ENCODE measurements at regions of chr2 and their contacts with region 1.

Region 1: DNA sequence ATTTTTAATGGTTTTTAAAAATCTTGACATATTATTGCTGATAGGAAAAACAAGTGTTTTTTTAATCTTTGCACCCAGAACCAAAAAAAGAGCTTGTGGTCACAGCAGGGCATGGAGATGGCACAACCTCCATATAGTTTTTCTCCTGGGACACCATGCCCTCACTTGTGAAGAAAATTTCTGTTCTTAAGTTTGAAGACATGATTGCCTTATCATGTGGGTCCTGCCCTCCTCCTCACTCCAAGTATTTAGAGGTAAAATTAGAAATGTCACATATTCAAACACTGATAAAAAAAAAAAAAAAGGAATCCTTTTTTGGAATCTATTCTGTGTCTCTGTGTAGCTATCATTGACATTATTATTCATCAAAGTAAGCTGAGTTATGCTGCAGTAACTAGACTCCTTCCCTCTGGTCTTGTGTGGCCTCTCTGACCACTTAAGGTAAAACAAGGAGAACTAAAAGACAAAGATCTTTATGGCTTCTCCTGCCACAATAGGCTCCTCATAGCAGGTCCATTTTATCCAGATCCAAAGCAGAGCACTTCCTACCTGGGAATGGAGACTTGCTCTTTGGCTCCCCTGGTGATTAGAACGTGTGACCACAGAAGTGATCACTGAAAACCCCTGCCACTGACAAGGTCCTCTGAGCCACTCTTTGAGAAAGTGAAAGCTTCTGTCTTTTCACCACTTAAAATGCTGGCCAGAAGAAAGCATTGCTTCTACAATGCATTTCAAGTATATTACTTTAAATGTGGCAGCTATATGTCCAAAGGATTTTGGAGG is 19.8 kb downstream of the ADD2 start:
- DNase-seq: peak in 1 of 2 experiments; percentile 38
- H3K4me3 ChIP-seq: no peak overlapping the region
- H3K27ac ChIP-seq: no peak overlapping the region
- H3K4me1 ChIP-seq: peaks cover 1 to 19% (median 9%) of the 10 kb centered on the region in 4 experiments; a peak in 4 of 7 replicates
- H3K27me3 ChIP-seq: no peaks in the 10 kb centered on the region
- CTCF ChIP-seq: peak in 2 of 3 experiments; percentile 18 to 51; a peak in 2 of 4 replicates
- EP300 ChIP-seq: no peak
- POLR2A ChIP-seq: no peak
- RAD21 ChIP-seq: peak in 1 of 2 experiments; percentile 38; a peak in 2 of 4 replicates

Region 2: DNA sequence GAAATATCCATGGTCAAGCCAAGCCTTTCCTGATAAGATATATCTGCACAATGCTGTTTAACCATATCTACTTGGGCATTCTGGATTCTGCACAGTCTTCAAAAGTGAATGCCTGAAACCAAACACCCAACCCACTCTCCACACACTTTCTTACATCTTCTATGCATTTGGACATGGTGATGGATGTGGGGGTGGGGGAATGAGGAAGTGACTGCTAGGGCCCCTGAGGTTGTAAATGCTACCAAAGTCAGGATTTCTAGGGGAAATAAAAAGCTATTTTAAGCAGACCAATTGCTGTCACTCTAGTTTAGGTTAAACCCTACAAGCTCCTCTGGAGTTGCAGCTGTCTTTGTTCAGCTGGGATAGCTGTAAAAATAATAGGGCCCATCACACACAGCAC is 167.8 kb before region 1 on chr2:
- CTCF ChIA-PET with region 1: no interaction called
- POLR2A ChIA-PET with region 1: no interaction called
- DNase-seq: no peak
- H3K4me3 ChIP-seq: no peak overlapping the region
- H3K27ac ChIP-seq: no peak overlapping the region
- H3K4me1 ChIP-seq: no peaks in the 10 kb centered on the region
- H3K27me3 ChIP-seq: no peaks in the 10 kb centered on the region
- CTCF ChIP-seq: no peak
- EP300 ChIP-seq: no peak
- POLR2A ChIP-seq: no peak
- RAD21 ChIP-seq: no peak

Region 3: GRCh38 chr2:70616168-70616694 is 132.0 kb before region 1 on chr2:
- CTCF ChIA-PET with region 1: no interaction called
- POLR2A ChIA-PET with region 1: no interaction called
- DNase-seq: no peak
- H3K4me3 ChIP-seq: no peak overlapping the region
- H3K27ac ChIP-seq: no peak overlapping the region
- H3K4me1 ChIP-seq: peaks cover 1 to 6% (median 2%) of the 10 kb centered on the region in 4 experiments; a peak in 5 of 7 replicates
- H3K27me3 ChIP-seq: no peaks in the 10 kb centered on the region; a peak in 1 of 7 replicates
- CTCF ChIP-seq: no peak
- EP300 ChIP-seq: no peak
- POLR2A ChIP-seq: no peak
- RAD21 ChIP-seq: no peak

Region 4: DNA sequence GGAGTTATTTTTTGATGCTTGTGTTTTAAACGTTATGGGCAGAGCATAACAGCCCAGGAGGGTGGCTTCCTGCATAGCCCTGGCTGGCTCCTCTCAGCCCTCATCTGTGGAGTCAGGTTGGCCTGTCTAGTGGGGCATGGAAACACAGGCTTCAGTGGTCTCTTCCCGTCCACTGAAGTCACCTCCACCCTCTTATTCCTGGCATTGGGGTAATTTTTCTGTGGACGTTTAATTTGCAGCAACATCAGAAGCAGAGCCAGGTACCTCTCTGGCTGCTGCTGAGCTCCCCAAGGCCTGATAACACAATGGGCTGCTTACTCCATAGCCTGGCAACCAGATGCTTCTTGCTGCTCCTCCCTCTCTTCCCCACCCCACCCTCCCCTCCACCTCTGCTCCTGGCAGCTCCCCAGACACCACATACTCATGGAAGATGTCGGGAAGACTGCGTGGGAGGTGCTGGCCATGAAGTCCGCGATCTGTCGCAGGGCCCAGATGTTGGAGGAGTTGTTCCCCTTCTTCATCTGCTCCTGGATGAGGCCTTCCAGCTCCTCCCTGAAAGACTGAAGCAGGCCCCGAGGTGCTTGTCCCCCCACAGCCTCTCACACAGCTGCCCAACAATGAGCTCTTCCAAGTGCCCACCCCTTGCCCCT is 44.2 kb before region 1 on chr2:
- CTCF ChIA-PET with region 1: interaction called, 12 read pairs
- POLR2A ChIA-PET with region 1: no interaction called
- DNase-seq: no peak
- H3K4me3 ChIP-seq: no peak overlapping the region
- H3K27ac ChIP-seq: no peak overlapping the region
- H3K4me1 ChIP-seq: no peaks in the 10 kb centered on the region
- H3K27me3 ChIP-seq: no peaks in the 10 kb centered on the region
- CTCF ChIP-seq: no peak
- EP300 ChIP-seq: no peak
- POLR2A ChIP-seq: no peak
- RAD21 ChIP-seq: no peak

Region 5: GRCh38 chr2:70738159-70738558 is 10.0 kb before region 1 on chr2:
- CTCF ChIA-PET with region 1: interaction called, 18 read pairs
- POLR2A ChIA-PET with region 1: interaction called, 3 read pairs
- DNase-seq: no peak
- H3K4me3 ChIP-seq: no peak overlapping the region
- H3K27ac ChIP-seq: no peak overlapping the region
- H3K4me1 ChIP-seq: peaks cover 12 to 25% (median 20%) of the 10 kb centered on the region in 4 experiments
- H3K27me3 ChIP-seq: no peaks in the 10 kb centered on the region
- CTCF ChIP-seq: no peak
- EP300 ChIP-seq: no peak
- POLR2A ChIP-seq: no peak
- RAD21 ChIP-seq: no peak

Region 6: GRCh38 chr2:70759446-70759845 is 11.3 kb after region 1 on chr2:
- CTCF ChIA-PET with region 1: interaction called, 13 read pairs
- POLR2A ChIA-PET with region 1: interaction called, 6 read pairs
- DNase-seq: no peak
- H3K4me3 ChIP-seq: no peak overlapping the region
- H3K27ac ChIP-seq: no peak overlapping the region
- H3K4me1 ChIP-seq: peaks cover 0 to 12% (median 5%) of the 10 kb centered on the region in 4 experiments; a peak in 6 of 7 replicates
- H3K27me3 ChIP-seq: no peaks in the 10 kb centered on the region
- CTCF ChIP-seq: no peak
- EP300 ChIP-seq: no peak
- POLR2A ChIP-seq: no peak
- RAD21 ChIP-seq: no peak

Region 7: DNA sequence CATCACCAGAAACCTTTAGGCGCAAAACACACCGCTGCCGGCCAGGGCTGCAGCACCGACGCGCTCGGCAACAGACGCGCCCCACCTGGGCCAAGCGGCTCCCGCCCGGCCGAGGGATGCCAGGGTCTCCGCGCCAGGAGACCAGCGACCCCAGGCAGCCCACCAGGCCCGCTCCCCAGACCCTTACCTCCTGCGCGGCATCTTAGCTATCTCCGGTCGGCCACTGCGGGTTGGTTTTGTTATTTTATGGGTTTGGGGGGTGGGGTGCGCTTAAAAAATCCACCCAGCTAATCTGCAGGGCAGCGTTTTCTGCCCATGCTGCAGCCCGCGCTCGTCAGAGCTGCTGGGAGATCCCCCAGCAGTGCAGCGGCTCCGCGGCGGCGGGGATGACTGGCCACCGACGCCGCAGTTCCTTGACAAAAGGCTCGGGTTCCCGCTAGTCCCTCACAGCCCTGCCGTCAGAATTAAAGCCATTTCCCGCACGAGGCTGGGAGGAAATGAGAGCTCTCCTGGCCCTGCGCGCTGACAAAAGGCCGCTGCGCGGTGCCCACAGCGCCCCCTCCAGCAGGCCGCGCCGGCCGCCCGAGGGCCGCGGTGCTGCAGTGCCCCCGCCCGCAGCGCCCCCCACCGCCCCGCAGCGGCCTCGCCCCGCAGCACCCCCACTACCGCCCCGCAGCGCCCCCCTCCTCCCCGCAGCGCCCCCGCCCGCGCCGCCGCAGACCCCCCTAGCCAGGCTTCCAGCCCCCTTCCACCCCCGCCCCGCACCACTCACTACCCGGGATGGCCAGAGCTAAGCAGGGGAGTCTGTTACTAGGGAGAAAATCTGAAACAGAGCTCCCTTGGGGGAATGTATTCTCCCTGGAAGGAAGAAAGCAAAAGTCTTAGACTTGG is 19.8 kb after region 1 on chr2 and contains the start of gene ADD2:
- CTCF ChIA-PET with region 1: interaction called, 39 read pairs
- POLR2A ChIA-PET with region 1: interaction called, 12 read pairs
- DNase-seq: peak in 1 of 2 experiments; percentile 80
- H3K4me3 ChIP-seq: peak within 1 kb of the TSS; percentile 67 to 86 (median 84)
- H3K27ac ChIP-seq: peak within 1 kb of the TSS; percentile 92
- H3K4me1 ChIP-seq: peaks cover 8 to 25% (median 16%) of the 10 kb centered on the region in 4 experiments; a peak in 6 of 7 replicates
- H3K27me3 ChIP-seq: no peaks in the 10 kb centered on the region
- CTCF ChIP-seq: peak; percentile 60 to 93 (median 71)
- EP300 ChIP-seq: no peak
- POLR2A ChIP-seq: peak; percentile 73 to 82
- RAD21 ChIP-seq: peak; percentile 22 to 56; a peak in 3 of 4 replicates
- total RNA-seq, gene ADD2: 166 and 170 TPM in 2 replicates

Region 8: DNA sequence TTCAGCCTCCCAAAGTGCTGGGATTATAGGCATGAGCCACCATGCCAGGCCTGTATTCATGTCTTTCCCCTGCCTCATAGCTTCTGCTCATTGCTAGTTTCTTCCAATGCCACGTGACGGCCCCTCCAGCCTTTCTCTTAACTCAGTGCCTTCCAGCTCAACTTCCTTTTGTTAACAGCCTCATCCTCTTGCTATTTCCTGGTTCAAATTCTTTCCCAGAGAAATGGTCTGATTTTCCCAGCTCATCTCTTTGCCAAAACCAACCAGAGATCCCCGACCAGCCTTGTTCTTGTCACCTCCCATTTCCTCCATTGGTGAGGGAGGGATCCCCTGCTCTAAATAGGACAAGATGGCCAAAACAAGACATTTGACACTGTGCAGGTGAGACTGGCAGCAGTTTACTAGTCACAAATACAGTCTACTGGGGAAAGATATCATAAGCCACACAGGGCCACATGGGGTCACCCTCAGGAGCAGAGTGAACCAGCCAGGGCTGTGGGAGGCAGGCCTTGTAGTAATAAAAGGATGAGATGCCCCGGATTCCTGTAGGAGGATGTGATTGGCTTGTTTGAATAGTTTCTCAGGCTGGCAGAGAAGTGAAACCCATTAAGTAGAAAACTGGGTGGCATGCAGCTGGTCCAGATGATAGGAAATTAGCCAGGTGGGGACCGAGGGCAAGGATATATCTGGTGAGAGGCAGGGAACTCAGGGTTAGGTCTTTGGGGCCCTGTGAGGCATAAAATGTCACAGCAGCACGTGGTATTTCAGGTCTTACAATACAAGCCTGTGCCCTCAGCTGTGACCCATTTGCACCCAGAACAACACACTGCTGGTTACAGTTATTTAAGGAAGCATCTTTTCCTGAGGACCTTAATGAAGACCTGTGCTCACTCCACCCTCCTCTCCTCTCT is 81.0 kb after region 1 on chr2:
- CTCF ChIA-PET with region 1: no interaction called
- POLR2A ChIA-PET with region 1: no interaction called
- DNase-seq: no peak
- H3K4me3 ChIP-seq: no peak overlapping the region
- H3K27ac ChIP-seq: no peak overlapping the region
- H3K4me1 ChIP-seq: peaks cover 0 to 5% (median 2%) of the 10 kb centered on the region in 4 experiments; a peak in 4 of 7 replicates
- H3K27me3 ChIP-seq: no peaks in the 10 kb centered on the region; a peak in 2 of 7 replicates
- CTCF ChIP-seq: no peak
- EP300 ChIP-seq: no peak
- POLR2A ChIP-seq: no peak
- RAD21 ChIP-seq: no peak

Measured in H1 (cell line).